Aorta (tissue), 5 donors: ENCODE measurements at regions of chr6 and their contacts with region 1.

Region 1: GRCh38 chr6:109690737-109691621 is at the starts of genes AK9 and FIG4:
- DNase-seq: peak; percentile 97
- ATAC-seq: peak; percentile 99
- H3K4me3 ChIP-seq: peak within 1 kb of the TSS; percentile 91 to 92
- H3K27ac ChIP-seq: peak within 1 kb of the TSS; percentile 61 to 88
- H3K4me1 ChIP-seq: peaks cover 0 to 2% of the 10 kb centered on the region in 2 donors
- H3K27me3 ChIP-seq: no peaks in the 10 kb centered on the region
- total RNA-seq, gene AK9: 10.8 to 12.5 TPM
- total RNA-seq, gene FIG4: 21.7 to 26.7 TPM

Region 2: DNA sequence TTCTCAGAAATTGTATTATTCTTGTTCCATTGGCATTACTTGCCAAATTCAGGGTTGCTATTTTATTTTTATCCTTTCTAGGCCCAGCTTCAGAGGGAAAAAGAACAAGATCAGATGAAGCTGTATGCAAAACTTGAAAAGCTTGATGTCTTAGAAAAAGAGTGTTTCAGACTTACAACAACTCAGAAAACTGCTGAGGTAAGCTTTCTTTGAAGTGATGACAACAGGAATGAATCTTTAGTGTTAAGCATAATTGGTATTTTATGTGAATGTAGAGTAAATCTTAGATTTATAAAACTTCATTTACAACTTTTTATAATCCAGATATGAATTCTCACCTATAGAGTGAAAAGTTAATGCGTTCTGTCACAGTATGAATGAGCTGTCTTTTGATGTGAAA is 537.2 kb before region 1 on chr6:
- intact Hi-C with region 1: no loop called
- DNase-seq: no peak
- ATAC-seq: no peak
- H3K4me3 ChIP-seq: no peak overlapping the region
- H3K27ac ChIP-seq: no peak overlapping the region
- H3K4me1 ChIP-seq: no peaks in the 10 kb centered on the region
- H3K27me3 ChIP-seq: no peaks in the 10 kb centered on the region

Region 3: GRCh38 chr6:109440331-109441068 is 250.5 kb before region 1 on chr6 and contains the starts of genes PPIL6 and SMPD2:
- intact Hi-C with region 1: loop called in 1 of 2 experiments (anchors 2 kb)
- DNase-seq: peak; percentile 94 to 96
- ATAC-seq: peak; percentile 96
- H3K4me3 ChIP-seq: peak within 1 kb of the TSS; percentile 57 to 63
- H3K27ac ChIP-seq: peak within 1 kb of the TSS in 1 of 2 donors; percentile 35
- H3K4me1 ChIP-seq: no peaks in the 10 kb centered on the region
- H3K27me3 ChIP-seq: no peaks in the 10 kb centered on the region
- total RNA-seq, gene PPIL6: 1.0 to 1.5 TPM
- total RNA-seq, gene SMPD2: 6.6 to 9.5 TPM

Region 4: DNA sequence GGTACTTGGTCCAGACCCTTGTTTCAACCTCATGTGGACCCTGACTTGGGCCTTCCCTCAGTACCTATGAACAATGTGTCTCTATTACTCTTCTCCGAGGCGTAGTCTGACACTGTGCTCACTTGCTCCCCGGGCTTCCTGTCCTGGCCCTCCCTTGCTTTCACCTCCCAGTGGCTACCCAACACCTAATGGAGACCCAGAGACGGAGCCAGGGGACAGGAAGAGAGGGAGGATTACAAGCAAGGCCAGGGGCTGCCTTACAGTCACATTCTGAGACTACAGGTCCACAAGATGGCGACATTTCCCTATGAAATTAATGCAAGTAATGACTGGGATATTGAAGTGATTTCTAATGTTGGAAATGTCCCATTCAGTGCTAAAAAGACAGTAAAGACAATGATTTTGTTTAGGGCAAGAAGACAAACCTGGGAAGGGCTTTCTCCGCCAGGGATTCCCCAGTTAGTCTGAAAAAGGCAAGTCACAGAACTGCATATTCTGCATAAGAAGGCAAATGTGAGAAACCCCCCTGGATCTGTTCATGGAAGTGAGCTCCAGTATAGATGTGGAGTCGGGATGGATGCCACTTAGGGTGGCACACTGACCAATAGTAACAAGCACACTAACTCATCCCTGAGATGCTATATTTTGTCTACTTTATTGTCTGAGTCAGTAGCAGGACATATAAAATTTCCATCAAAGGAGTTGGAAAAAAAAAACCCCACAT is 163.9 kb before region 1 on chr6:
- intact Hi-C with region 1: loop called in 1 of 2 experiments (anchors 10 kb)
- DNase-seq: peak in 1 of 2 donors; percentile 53
- ATAC-seq: peak; percentile 74
- H3K4me3 ChIP-seq: no peak overlapping the region
- H3K27ac ChIP-seq: no peak overlapping the region
- H3K4me1 ChIP-seq: no peaks in the 10 kb centered on the region
- H3K27me3 ChIP-seq: no peaks in the 10 kb centered on the region

Region 5: GRCh38 chr6:109718991-109719390 is 28.0 kb after region 1 on chr6:
- intact Hi-C with region 1: no loop called
- DNase-seq: no peak
- ATAC-seq: no peak
- H3K4me3 ChIP-seq: no peak overlapping the region
- H3K27ac ChIP-seq: no peak overlapping the region
- H3K4me1 ChIP-seq: peaks cover 0 to 11% of the 10 kb centered on the region in 2 donors
- H3K27me3 ChIP-seq: no peaks in the 10 kb centered on the region

Region 6: GRCh38 chr6:110179401-110180227 is 488.6 kb after region 1 on chr6 and contains the start of gene WASF1:
- intact Hi-C with region 1: loop called in 1 of 2 experiments (anchors 10 kb)
- DNase-seq: peak; percentile 96
- ATAC-seq: peak; percentile 99
- H3K4me3 ChIP-seq: peak within 1 kb of the TSS; percentile 87 to 98
- H3K27ac ChIP-seq: peak within 1 kb of the TSS in 1 of 2 donors; percentile 79
- H3K4me1 ChIP-seq: peaks cover 1 to 2% of the 10 kb centered on the region in 2 donors
- H3K27me3 ChIP-seq: no peaks in the 10 kb centered on the region
- total RNA-seq, gene WASF1: 8.9 to 10.3 TPM